Esophagus muscularis mucosa (tissue), 4 donors: ENCODE measurements at regions of chr11 and their contacts with region 1.

Region 1: DNA sequence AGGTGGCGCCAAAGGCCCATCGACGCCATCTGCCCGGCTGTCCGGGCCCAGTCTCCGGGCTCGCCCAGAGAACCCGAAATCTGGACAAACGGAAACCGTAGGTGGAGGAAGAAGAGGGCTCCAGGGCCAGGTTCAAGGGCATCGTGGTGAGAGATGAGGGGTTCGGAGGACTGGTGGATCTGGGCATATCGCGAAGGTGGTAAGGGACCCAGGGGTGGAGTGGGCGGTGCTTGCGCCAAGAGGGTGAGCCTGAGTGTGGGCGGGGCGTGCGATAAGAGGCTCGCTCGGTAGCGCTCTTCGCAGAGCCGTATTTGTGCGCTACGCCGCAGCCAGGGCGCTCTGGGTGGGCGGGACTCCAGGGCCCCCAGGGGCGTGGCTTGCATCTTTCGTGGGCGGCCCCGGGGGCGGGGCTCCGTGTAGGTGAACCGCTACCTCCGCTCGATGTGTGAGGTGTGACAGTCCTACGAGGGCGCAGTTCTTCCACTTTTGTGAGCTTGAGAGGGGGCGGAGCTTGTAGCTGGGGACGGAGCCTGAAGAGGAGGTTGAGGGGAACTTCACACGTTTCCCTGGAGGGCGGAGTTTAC is 4.8 kb downstream of the CD248 start:
- DNase-seq: peak; percentile 97
- H3K4me3 ChIP-seq: peak overlapping the region; percentile 59 to 75 (median 62)
- H3K27ac ChIP-seq: peak overlapping the region; percentile 83 to 95 (median 89)
- H3K4me1 ChIP-seq: peaks cover 28 to 56% (median 49%) of the 10 kb centered on the region in 4 donors
- H3K27me3 ChIP-seq: peaks cover 0 to 8% (median 0%) of the 10 kb centered on the region in 4 donors
- CTCF ChIP-seq: peak in 2 of 3 experiments; percentile 94 to 99
- EP300 ChIP-seq: no peak
- POLR2A ChIP-seq: no peak

Region 2: GRCh38 chr11:66328307-66329144 is 16.5 kb after region 1 on chr11:
- intact Hi-C with region 1: loop called (anchors 2 kb)
- DNase-seq: no peak
- H3K4me3 ChIP-seq: peak overlapping the region in 3 of 4 donors; percentile 8 to 28 (median 8)
- H3K27ac ChIP-seq: peak overlapping the region; percentile 52 to 78 (median 68)
- H3K4me1 ChIP-seq: peaks cover 32 to 35% (median 34%) of the 10 kb centered on the region in 4 donors
- H3K27me3 ChIP-seq: no peaks in the 10 kb centered on the region
- CTCF ChIP-seq: peak; percentile 93 to 98 (median 97)
- EP300 ChIP-seq: no peak
- POLR2A ChIP-seq: no peak

Region 3: GRCh38 chr11:66339163-66339675 is 27.2 kb after region 1 on chr11:
- intact Hi-C with region 1: no loop called
- DNase-seq: no peak
- H3K4me3 ChIP-seq: no peak overlapping the region
- H3K27ac ChIP-seq: no peak overlapping the region
- H3K4me1 ChIP-seq: peaks cover 31 to 48% (median 40%) of the 10 kb centered on the region in 4 donors
- H3K27me3 ChIP-seq: no peaks in the 10 kb centered on the region
- CTCF ChIP-seq: no peak
- EP300 ChIP-seq: no peak
- POLR2A ChIP-seq: no peak

Region 4: GRCh38 chr11:66386171-66387069 is 74.4 kb after region 1 on chr11:
- intact Hi-C with region 1: loop called (anchors 5 kb)
- DNase-seq: peak; percentile 97
- H3K4me3 ChIP-seq: peak overlapping the region; percentile 24 to 51 (median 34)
- H3K27ac ChIP-seq: no peak overlapping the region
- H3K4me1 ChIP-seq: peaks cover 7 to 10% (median 8%) of the 10 kb centered on the region in 4 donors
- H3K27me3 ChIP-seq: peaks cover 0 to 36% (median 0%) of the 10 kb centered on the region in 4 donors
- CTCF ChIP-seq: peak; percentile 90 to 97 (median 92)
- EP300 ChIP-seq: no peak
- POLR2A ChIP-seq: no peak